B cell (primary cell): ENCODE measurements at regions of chr9 and their contacts with region 1.

Region 1: DNA sequence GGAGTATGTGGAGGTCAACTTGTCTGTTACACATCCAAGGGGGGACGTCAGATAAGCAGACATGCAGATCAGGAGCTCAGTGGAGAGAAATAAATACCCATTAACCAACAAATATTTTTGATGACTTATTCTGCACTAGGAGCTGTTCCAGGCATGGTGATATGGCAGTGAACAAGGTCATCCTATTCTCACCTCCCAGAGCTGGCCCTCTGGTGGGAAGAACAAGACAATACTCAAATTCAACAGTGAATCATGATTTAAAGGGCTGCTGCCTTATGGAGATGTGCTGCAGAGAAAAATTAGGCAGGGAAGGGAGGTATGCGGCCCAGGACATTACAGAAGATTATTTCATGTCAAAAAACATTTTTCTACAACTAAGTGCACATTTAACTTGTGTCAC is 36.5 kb downstream of the SYK start:
- DNase-seq: no peak
- ATAC-seq: no peak
- H3K4me3 ChIP-seq: no peak overlapping the region
- H3K4me3 Mint-ChIP-seq: peak overlapping the region; percentile 47
- H3K27ac ChIP-seq: peak overlapping the region in 1 of 2 donors; percentile 41
- H3K27ac Mint-ChIP-seq: peak overlapping the region; percentile 87
- H3K4me1 ChIP-seq: peaks cover 92 to 96% of the 10 kb centered on the region in 2 donors
- H3K4me1 Mint-ChIP-seq: peaks cover 68% of the 10 kb centered on the region
- H3K27me3 ChIP-seq: no peaks in the 10 kb centered on the region
- H3K27me3 Mint-ChIP-seq: no peaks in the 10 kb centered on the region
- CTCF ChIP-seq: peak; percentile 29

Region 2: GRCh38 chr9:90801583-90802289 is 36.4 kb before region 1 on chr9 and contains the start of gene SYK:
- CTCF ChIA-PET with region 1: interaction called, 21 read pairs
- POLR2A ChIA-PET with region 1: no interaction called
- intact Hi-C with region 1: no loop called
- DNase-seq: peak; percentile 87
- ATAC-seq: peak; percentile 83
- H3K4me3 ChIP-seq: peak within 1 kb of the TSS; percentile 87 to 98 (median 93)
- H3K4me3 Mint-ChIP-seq: peak within 1 kb of the TSS; percentile 97
- H3K27ac ChIP-seq: peak within 1 kb of the TSS; percentile 87 to 93
- H3K27ac Mint-ChIP-seq: peak within 1 kb of the TSS; percentile 92
- H3K4me1 ChIP-seq: peaks cover 47 to 51% of the 10 kb centered on the region in 2 donors
- H3K4me1 Mint-ChIP-seq: peaks cover 68% of the 10 kb centered on the region
- H3K27me3 ChIP-seq: no peaks in the 10 kb centered on the region
- H3K27me3 Mint-ChIP-seq: no peaks in the 10 kb centered on the region
- CTCF ChIP-seq: no peak
- total RNA-seq, gene SYK: 242 and 251 TPM in 2 replicates

Region 3: DNA sequence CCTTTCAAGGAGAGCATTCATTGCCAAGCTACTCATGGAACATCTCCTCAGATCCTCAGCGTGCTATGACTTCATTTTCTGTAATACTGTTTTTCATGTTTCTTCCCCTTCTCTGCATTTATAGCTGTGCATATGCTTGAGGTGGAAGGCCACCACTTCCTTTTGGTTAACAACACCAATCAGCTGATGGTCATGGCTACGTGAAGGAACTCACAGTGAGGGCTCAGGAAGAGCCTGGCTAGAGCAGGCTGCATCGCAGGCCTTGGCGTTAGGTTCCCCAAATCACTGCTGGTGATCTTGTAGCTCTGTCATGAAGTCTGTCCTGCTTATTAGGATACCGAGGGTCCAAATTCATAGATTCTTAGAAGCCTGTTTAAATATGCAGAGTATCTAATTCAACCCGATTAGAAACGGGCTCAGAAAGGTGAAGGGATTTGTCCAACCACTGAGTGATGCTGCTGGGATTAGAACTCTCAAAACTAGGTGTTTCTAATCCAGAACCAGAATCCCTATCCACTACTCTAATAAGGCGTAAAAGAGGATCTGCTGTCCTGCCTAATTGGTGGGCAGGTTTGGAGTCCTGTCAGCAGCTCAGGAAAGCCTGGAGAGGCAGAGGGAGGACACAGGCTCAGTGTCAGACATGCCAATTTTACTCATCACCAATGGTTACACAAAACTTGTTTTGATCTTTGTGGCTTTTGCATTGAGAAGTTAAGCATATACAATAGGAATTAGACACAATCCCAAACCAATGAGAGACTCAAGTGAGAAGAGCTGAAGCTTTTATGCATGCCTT is 29.0 kb before region 1 on chr9:
- CTCF ChIA-PET with region 1: interaction called, 21 read pairs
- POLR2A ChIA-PET with region 1: no interaction called
- intact Hi-C with region 1: no loop called
- DNase-seq: peak; percentile 47
- ATAC-seq: peak; percentile 54
- H3K4me3 ChIP-seq: peak overlapping the region in 1 of 5 experiments; percentile 22
- H3K4me3 Mint-ChIP-seq: peak overlapping the region; percentile 89
- H3K27ac ChIP-seq: peak overlapping the region; percentile 42 to 93
- H3K27ac Mint-ChIP-seq: peak overlapping the region; percentile 98
- H3K4me1 ChIP-seq: peaks cover 87 to 93% of the 10 kb centered on the region in 2 donors
- H3K4me1 Mint-ChIP-seq: peaks cover 95% of the 10 kb centered on the region
- H3K27me3 ChIP-seq: no peaks in the 10 kb centered on the region
- H3K27me3 Mint-ChIP-seq: no peaks in the 10 kb centered on the region
- CTCF ChIP-seq: no peak

Region 4: DNA sequence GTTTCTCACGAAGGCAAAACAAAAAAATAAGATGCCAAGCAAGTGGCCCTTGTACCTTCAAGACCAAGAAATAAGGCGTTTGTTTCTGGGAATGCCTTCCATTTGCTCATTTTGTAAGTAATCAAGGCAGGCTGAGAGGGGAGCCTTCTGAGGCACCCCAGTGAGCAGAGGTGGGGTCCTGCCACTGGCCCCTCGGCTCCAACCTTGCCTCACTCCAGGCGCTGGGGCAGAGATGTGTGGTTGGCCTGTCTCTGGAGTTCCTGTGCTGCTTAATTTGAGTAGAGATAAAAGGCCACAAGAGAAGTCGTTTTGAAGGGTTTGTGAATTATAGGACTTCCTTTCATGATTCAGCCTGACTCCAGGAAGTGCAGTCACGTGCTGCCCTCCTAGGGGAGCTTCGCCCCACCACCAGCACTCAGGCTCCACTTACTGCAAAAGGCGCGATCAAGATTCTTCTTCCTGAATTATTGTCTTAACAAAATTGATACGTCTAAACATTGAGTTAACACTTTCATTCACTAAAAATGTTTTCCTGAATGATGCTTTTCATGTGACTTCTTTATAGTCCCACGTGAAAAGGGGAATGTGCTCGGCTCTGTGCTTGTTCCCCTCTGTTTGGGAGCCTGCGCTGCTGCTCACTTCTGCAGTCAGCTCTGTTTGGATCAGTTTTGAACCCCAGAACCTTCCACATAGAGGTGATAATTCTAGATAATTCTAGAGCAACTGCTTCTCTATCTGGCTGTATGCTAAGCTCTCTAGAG is 22.7 kb before region 1 on chr9:
- CTCF ChIA-PET with region 1: interaction called, 14 read pairs
- POLR2A ChIA-PET with region 1: interaction called, 3 read pairs
- intact Hi-C with region 1: no loop called
- DNase-seq: peak; percentile 73
- ATAC-seq: peak; percentile 75
- H3K4me3 ChIP-seq: peak overlapping the region in 3 of 5 experiments; percentile 15 to 39 (median 16)
- H3K4me3 Mint-ChIP-seq: peak overlapping the region; percentile 81
- H3K27ac ChIP-seq: peak overlapping the region; percentile 70 to 86
- H3K27ac Mint-ChIP-seq: peak overlapping the region; percentile 98
- H3K4me1 ChIP-seq: peaks cover 65 to 67% of the 10 kb centered on the region in 2 donors
- H3K4me1 Mint-ChIP-seq: peaks cover 90% of the 10 kb centered on the region
- H3K27me3 ChIP-seq: no peaks in the 10 kb centered on the region
- H3K27me3 Mint-ChIP-seq: no peaks in the 10 kb centered on the region
- CTCF ChIP-seq: no peak

Region 5: DNA sequence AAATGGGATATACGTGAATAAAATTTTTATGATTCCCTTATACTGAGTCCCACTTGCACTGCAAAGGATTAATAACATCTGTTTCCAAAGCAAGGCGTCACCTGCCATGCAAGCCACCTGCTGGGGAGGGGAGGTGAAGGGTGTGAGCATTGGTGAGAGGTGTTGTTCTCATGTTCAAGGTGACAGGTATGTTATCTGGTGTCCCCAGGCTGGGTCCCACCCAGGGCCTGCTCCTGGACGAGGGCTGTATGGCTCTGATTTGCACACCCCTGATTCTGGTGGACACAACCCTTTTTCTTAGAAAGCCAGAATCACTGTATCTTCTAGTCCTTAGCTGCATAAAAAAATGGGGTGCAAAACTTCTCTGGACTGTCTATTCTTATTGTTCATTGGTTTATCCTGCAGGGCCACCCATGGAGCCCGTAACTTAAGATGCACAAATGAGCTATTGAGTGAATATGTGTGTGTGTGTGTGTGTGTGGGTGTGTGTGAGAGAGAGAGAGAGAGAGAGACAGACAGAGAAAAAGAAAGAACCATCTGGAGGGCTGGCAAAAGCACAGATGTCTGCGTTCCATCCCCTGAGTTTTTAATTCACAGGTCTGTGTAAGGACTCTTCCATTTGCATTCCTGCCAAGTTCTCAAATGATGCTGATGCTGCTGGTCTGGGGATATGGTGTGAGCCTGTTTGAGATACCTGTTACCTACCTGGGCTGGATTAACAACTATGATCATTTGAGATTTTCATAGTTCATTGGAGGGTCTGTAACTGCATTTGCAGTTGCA is 17.3 kb after region 1 on chr9:
- CTCF ChIA-PET with region 1: no interaction called
- POLR2A ChIA-PET with region 1: no interaction called
- intact Hi-C with region 1: no loop called
- DNase-seq: no peak
- ATAC-seq: no peak
- H3K4me3 ChIP-seq: no peak overlapping the region
- H3K4me3 Mint-ChIP-seq: no peak overlapping the region
- H3K27ac ChIP-seq: peak overlapping the region in 1 of 2 donors; percentile 4
- H3K27ac Mint-ChIP-seq: peak overlapping the region; percentile 66
- H3K4me1 ChIP-seq: peaks cover 16 to 29% of the 10 kb centered on the region in 2 donors
- H3K4me1 Mint-ChIP-seq: peaks cover 63% of the 10 kb centered on the region
- H3K27me3 ChIP-seq: no peaks in the 10 kb centered on the region
- H3K27me3 Mint-ChIP-seq: no peaks in the 10 kb centered on the region
- CTCF ChIP-seq: no peak

Region 6: GRCh38 chr9:90894986-90895687 is 57.0 kb after region 1 on chr9:
- CTCF ChIA-PET with region 1: no interaction called
- POLR2A ChIA-PET with region 1: no interaction called
- intact Hi-C with region 1: no loop called
- DNase-seq: no peak
- ATAC-seq: no peak
- H3K4me3 ChIP-seq: no peak overlapping the region
- H3K4me3 Mint-ChIP-seq: no peak overlapping the region
- H3K27ac ChIP-seq: no peak overlapping the region
- H3K27ac Mint-ChIP-seq: peak overlapping the region; percentile 24
- H3K4me1 ChIP-seq: no peaks in the 10 kb centered on the region
- H3K4me1 Mint-ChIP-seq: no peaks in the 10 kb centered on the region
- H3K27me3 ChIP-seq: no peaks in the 10 kb centered on the region
- H3K27me3 Mint-ChIP-seq: no peaks in the 10 kb centered on the region
- CTCF ChIP-seq: peak; percentile 49